CD8-positive, alpha-beta memory T cell (primary cell): ENCODE measurements at regions of chr11 and their contacts with region 1.

Region 1: GRCh38 chr11:6402561-6402981 is 12.3 kb downstream of the SMPD1 start:
- DNase-seq: peak; percentile 50 to 97 (median 89)
- H3K4me3 ChIP-seq: peak overlapping the region; percentile 66
- H3K4me3 Mint-ChIP-seq: peak overlapping the region; percentile 69 to 94 (median 85)
- H3K27ac ChIP-seq: peak overlapping the region; percentile 41
- H3K27ac Mint-ChIP-seq: peak overlapping the region; percentile 93 to 99 (median 98)
- H3K4me1 ChIP-seq: peaks cover 88% of the 10 kb centered on the region
- H3K4me1 Mint-ChIP-seq: peaks cover 76 to 96% (median 91%) of the 10 kb centered on the region in 3 donors
- H3K27me3 ChIP-seq: no peaks in the 10 kb centered on the region
- H3K27me3 Mint-ChIP-seq: peaks cover 0 to 5% of the 10 kb centered on the region in 2 donors

Region 2: GRCh38 chr11:6315811-6316425 is 86.7 kb before region 1 on chr11:
- CTCF ChIA-PET with region 1: no interaction called
- POLR2A ChIA-PET with region 1: no interaction called
- DNase-seq: peak in 1 of 5 donors; percentile 7
- H3K4me3 ChIP-seq: no peak overlapping the region
- H3K4me3 Mint-ChIP-seq: no peak overlapping the region
- H3K27ac ChIP-seq: no peak overlapping the region
- H3K27ac Mint-ChIP-seq: no peak overlapping the region
- H3K4me1 ChIP-seq: no peaks in the 10 kb centered on the region
- H3K4me1 Mint-ChIP-seq: peaks cover 5 to 14% (median 11%) of the 10 kb centered on the region in 3 donors
- H3K27me3 ChIP-seq: no peaks in the 10 kb centered on the region
- H3K27me3 Mint-ChIP-seq: peaks cover 30 to 60% of the 10 kb centered on the region in 2 donors

Region 3: DNA sequence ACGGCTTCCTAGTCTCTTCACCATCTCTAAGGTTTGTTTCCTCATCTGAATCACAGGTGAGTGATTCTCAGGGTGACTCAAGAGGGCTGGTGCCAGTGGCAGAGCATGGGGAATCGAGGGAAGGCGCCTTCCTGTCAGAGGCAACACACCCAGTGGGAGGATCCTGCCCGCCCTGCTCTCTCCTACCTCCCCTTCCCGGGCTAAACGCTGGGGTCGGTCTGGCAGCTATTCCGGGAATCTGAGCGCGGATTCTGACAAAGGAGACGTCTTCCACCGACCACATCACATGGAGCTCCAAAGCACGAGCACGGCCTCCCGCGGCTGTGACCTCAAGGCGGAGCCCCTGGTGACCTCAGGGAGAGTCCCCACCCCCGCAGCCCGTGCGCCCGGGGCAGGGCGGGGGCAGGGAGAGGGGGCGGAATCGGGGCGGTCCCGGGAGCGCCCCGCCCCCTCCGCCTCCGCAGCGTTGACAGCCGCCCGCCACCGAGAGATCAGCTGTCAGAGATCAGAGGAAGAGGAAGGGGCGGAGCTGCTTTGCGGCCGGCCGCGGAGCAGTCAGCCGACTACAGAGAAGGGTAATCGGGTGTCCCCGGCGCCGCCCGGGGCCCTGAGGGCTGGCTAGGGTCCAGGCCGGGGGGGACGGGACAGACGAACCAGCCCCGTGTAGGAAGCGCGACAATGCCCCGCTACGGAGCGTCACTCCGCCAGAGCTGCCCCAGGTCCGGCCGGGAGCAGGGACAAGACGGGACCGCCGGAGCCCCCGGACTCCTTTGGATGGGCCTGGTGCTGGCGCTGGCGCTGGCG is 12.4 kb before region 1 on chr11 and contains the start of gene SMPD1:
- CTCF ChIA-PET with region 1: interaction called, 13 read pairs
- POLR2A ChIA-PET with region 1: interaction called, 56 read pairs
- DNase-seq: peak; percentile 91 to 97 (median 93)
- H3K4me3 ChIP-seq: peak within 1 kb of the TSS; percentile 64
- H3K4me3 Mint-ChIP-seq: peak within 1 kb of the TSS; percentile 85 to 96 (median 93)
- H3K27ac ChIP-seq: peak within 1 kb of the TSS; percentile 71
- H3K27ac Mint-ChIP-seq: peak within 1 kb of the TSS; percentile 89 to 100 (median 98)
- H3K4me1 ChIP-seq: peaks cover 48% of the 10 kb centered on the region
- H3K4me1 Mint-ChIP-seq: peaks cover 43 to 64% (median 47%) of the 10 kb centered on the region in 3 donors
- H3K27me3 ChIP-seq: no peaks in the 10 kb centered on the region
- H3K27me3 Mint-ChIP-seq: no peaks in the 10 kb centered on the region
- total RNA-seq, gene SMPD1: 30.4 to 30.9 TPM

Region 4: GRCh38 chr11:6413791-6414201 is 11.2 kb after region 1 on chr11:
- CTCF ChIA-PET with region 1: interaction called, 23 read pairs
- POLR2A ChIA-PET with region 1: interaction called, 56 read pairs
- DNase-seq: peak in 3 of 5 donors; percentile 36 to 86 (median 64)
- H3K4me3 ChIP-seq: peak overlapping the region; percentile 43
- H3K4me3 Mint-ChIP-seq: no peak overlapping the region
- H3K27ac ChIP-seq: no peak overlapping the region
- H3K27ac Mint-ChIP-seq: peak overlapping the region in 2 of 8 donors; percentile 37 to 85
- H3K4me1 ChIP-seq: peaks cover 79% of the 10 kb centered on the region
- H3K4me1 Mint-ChIP-seq: peaks cover 13 to 35% (median 20%) of the 10 kb centered on the region in 3 donors
- H3K27me3 ChIP-seq: no peaks in the 10 kb centered on the region
- H3K27me3 Mint-ChIP-seq: no peaks in the 10 kb centered on the region

Region 5: DNA sequence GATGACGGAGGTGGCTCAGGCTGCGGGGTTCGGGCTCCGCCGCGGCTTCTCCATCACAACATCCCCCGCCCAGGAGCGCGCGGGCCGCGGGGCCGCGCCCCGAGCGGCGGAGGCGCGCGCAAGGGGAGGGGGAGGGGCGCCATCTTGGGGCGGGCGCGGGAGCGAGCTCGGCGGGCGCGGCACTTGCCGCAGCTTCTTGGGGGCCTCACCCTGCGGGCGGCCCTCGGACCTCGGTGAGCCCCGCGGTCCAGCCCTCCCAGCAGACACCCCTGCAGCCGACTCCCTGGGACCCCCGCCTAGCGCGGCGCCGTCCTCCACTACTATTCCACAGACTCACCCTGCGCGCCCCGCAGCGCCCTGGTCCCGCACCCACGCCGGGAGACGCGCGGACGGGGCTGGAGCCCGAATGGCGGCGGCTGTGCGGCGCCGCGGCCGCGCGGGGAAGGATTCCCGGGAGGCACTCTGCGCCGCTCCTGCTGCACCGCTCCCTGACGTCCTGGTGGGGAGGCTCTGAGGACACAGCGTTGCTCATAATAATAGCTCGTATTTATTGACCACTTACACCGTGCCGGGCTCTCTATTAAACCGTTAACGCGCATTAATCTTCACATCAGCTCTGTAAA is 16.5 kb after region 1 on chr11 and contains the start of gene APBB1:
- CTCF ChIA-PET with region 1: interaction called, 23 read pairs
- POLR2A ChIA-PET with region 1: interaction called, 56 read pairs
- DNase-seq: peak; percentile 61 to 83 (median 75)
- H3K4me3 ChIP-seq: peak within 1 kb of the TSS; percentile 77
- H3K4me3 Mint-ChIP-seq: peak within 1 kb of the TSS in 4 of 7 donors; percentile 81 to 93 (median 87)
- H3K27ac ChIP-seq: peak within 1 kb of the TSS; percentile 57
- H3K27ac Mint-ChIP-seq: peak within 1 kb of the TSS; percentile 70 to 96 (median 84)
- H3K4me1 ChIP-seq: peaks cover 49% of the 10 kb centered on the region
- H3K4me1 Mint-ChIP-seq: peaks cover 6 to 10% (median 6%) of the 10 kb centered on the region in 3 donors
- H3K27me3 ChIP-seq: no peaks in the 10 kb centered on the region
- H3K27me3 Mint-ChIP-seq: peaks cover 7 to 15% of the 10 kb centered on the region in 2 donors
- total RNA-seq, gene APBB1: 41.7 to 43.6 TPM

Region 6: DNA sequence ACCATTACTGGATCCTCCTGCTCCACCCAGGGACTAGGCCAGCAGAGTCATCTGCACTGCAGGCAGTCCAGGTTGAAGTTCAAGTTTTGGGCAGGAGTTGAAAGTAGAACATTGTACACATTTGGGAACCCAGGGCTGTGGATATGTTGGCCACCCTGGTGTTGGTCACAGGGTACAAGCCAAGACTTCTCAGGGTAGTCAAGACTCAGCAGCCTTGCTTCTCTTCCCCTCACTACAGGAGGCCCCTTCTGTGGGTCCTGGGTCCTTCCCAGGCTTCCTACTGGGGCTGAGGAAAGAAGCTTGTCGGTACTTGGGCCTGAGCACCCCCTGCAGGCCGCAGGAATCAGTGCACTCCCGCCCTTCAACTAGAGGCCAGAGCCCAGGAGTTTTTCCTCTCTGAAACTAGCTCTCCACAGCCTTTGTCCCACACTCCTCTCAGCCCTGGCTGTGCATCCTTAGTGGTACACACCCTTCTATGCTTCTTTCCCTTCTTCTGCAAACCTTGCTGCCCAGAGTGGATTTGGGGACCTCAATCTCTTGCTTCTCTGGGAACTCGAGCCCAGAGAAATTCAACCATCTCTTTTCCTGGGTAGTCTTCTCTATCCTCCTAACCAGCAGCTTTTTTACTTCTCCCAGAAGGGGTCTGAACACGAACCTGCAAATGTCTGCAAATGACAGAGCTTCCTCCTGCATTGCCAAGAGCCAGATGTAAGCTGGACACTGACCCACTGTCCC is 40.9 kb after region 1 on chr11:
- CTCF ChIA-PET with region 1: interaction called, 15 read pairs
- POLR2A ChIA-PET with region 1: no interaction called
- DNase-seq: peak; percentile 33 to 69 (median 44)
- H3K4me3 ChIP-seq: no peak overlapping the region
- H3K4me3 Mint-ChIP-seq: no peak overlapping the region
- H3K27ac ChIP-seq: no peak overlapping the region
- H3K27ac Mint-ChIP-seq: no peak overlapping the region
- H3K4me1 ChIP-seq: peaks cover 21% of the 10 kb centered on the region
- H3K4me1 Mint-ChIP-seq: no peaks in the 10 kb centered on the region
- H3K27me3 ChIP-seq: no peaks in the 10 kb centered on the region
- H3K27me3 Mint-ChIP-seq: no peaks in the 10 kb centered on the region

Region 7: DNA sequence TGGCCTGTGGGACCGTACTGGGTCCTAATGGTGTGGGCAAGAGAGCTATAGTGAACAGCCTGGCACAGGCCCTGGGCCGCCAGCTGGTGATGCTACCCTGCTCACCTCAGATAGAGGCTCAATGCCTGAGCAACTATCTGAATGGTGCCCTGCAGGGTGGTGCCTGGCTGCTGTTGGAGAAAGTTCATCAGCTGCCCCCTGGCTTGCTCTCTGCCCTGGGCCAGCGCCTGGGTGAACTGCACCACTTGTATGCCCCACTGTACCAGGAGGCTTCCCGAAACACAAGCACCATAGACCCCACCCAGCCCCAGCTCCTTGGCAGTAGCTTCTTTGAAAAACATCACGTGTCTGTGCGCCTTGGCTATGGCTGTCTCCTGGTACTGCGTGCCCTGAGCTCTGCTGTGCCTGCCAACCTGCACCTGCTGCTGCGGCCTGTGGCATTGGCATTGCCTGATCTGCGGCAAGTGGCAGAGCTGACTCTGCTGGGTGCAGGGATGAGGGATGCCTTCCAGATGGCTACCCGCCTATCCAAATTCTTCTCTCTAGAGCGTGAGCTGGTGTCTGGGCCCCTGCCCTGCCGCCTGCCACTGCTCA is 143.5 kb after region 1 on chr11:
- CTCF ChIA-PET with region 1: no interaction called
- POLR2A ChIA-PET with region 1: no interaction called
- DNase-seq: no peak
- H3K4me3 ChIP-seq: no peak overlapping the region
- H3K4me3 Mint-ChIP-seq: no peak overlapping the region
- H3K27ac ChIP-seq: no peak overlapping the region
- H3K27ac Mint-ChIP-seq: no peak overlapping the region
- H3K4me1 ChIP-seq: no peaks in the 10 kb centered on the region
- H3K4me1 Mint-ChIP-seq: peaks cover 8 to 11% (median 10%) of the 10 kb centered on the region in 3 donors
- H3K27me3 ChIP-seq: no peaks in the 10 kb centered on the region
- H3K27me3 Mint-ChIP-seq: no peaks in the 10 kb centered on the region